Caco-2 (cell line): ENCODE measurements at regions of chr11 and their contacts with region 1.

Region 1: DNA sequence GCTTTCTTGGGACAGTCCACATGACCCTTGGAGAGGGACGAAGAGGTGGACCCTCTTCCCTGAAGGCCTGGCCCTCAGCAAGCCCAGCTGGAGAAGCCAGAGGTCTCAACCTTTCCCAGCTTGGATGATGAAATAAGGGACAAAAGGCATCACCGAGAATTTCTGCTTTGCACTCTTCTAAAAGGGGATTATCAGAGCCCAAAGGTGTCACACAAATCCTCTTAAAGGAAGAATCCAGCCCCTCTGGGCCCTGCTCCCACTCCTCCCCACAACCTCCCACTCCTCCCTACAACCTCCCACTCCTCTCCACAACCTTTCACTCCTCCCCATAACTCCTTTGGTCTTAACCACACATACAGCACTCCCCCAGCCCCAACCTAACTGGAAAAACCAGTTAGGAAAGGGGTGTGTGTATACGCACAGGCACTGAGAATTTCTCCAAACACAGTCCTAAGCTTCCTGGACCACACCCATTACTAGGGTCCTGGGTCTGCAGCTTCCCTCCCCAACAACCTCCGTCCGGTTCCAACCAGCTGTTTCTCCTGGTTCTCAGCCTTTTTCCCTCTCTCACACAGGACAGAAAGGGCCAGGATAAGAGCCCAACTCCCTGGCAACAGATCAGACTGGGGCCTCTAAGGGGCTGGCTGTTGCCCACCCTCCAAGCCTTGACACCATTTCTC is 38.5 kb downstream of the RPL27A start:
- DNase-seq: peak; percentile 88 to 90
- H3K4me3 ChIP-seq: no peak overlapping the region
- H3K4me3 Mint-ChIP-seq: peak overlapping the region; percentile 57
- H3K27ac Mint-ChIP-seq: peak overlapping the region; percentile 90
- H3K4me1 ChIP-seq: peaks cover 82% of the 10 kb centered on the region
- H3K4me1 Mint-ChIP-seq: peaks cover 62% of the 10 kb centered on the region
- H3K27me3 ChIP-seq: no peaks in the 10 kb centered on the region
- H3K27me3 Mint-ChIP-seq: no peaks in the 10 kb centered on the region
- CTCF ChIP-seq: no peak

Region 2: DNA sequence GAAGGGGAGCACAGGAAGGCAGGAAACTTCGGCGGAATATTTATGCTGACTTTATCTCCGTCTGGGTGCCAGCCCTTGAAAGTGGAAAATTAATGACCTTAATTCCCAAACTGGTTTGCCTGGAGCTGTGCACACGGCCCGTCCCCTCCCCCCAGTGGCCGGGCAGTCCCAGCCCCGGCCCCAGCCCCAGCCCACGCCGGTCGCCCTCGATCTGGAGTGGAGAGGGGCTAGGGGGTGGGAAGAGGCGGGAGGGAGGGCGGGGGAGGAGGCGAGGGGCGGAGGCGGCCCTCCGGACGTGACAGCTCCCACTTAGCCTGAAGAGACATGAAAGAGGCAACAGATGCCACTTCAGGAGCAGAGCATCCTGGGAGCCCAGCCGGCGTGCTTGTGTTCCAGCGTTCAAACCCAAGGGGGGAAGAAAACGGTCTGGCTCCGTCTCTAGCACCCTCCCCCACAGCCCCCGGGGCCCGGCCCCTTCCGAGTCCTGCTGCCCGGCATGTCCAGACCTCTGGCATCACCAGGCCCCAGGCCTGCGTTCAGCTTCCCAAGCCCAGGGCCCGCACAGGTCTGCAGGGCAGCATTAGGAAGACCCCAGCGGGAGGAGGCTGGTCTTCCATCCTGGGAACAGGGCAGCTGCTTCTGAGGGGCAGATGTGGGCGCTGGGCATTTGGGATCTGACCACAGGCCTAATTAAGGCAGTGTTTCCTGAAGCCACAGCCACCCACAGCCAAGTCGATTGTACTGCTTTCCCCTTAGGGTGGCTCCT is 437.5 kb before region 1 on chr11:
- CTCF ChIA-PET with region 1: no interaction called
- POLR2A ChIA-PET with region 1: no interaction called
- intact Hi-C with region 1: no loop called
- DNase-seq: no peak
- H3K4me3 ChIP-seq: no peak overlapping the region
- H3K4me3 Mint-ChIP-seq: no peak overlapping the region
- H3K27ac Mint-ChIP-seq: no peak overlapping the region
- H3K4me1 ChIP-seq: no peaks in the 10 kb centered on the region
- H3K4me1 Mint-ChIP-seq: no peaks in the 10 kb centered on the region
- H3K27me3 ChIP-seq: peaks cover 2% of the 10 kb centered on the region; the same call in 1 of the 2 replicates
- H3K27me3 Mint-ChIP-seq: peaks cover 13% of the 10 kb centered on the region
- CTCF ChIP-seq: no peak

Region 3: GRCh38 chr11:8543278-8543677 is 177.9 kb before region 1 on chr11:
- CTCF ChIA-PET with region 1: no interaction called
- POLR2A ChIA-PET with region 1: no interaction called
- intact Hi-C with region 1: no loop called
- DNase-seq: no peak
- H3K4me3 ChIP-seq: no peak overlapping the region
- H3K4me3 Mint-ChIP-seq: no peak overlapping the region
- H3K27ac Mint-ChIP-seq: no peak overlapping the region
- H3K4me1 ChIP-seq: no peaks in the 10 kb centered on the region
- H3K4me1 Mint-ChIP-seq: no peaks in the 10 kb centered on the region
- H3K27me3 ChIP-seq: no peaks in the 10 kb centered on the region
- H3K27me3 Mint-ChIP-seq: peaks cover 10% of the 10 kb centered on the region
- CTCF ChIP-seq: no peak

Region 4: DNA sequence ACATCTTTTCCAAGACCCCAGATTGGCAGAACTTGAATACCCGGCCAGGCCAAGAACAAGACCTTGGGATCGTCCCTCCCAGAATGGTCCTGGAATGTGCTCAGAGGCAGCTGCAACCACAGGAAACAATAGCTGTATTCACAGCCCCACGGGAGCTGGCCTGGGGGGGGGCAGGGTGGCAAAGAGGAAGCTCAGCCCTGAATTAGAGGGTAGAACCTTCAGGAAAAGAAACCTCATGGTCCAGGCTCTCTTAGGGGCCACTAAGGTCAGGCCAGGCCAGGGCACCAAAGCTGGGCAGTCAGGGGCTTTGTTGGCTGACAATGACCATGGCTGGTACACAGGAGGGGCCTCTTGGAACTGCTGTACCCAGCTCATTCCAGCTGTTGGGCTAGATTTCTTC is 21.2 kb before region 1 on chr11:
- CTCF ChIA-PET with region 1: no interaction called
- POLR2A ChIA-PET with region 1: interaction called, 3 read pairs
- intact Hi-C with region 1: loop called (anchors 1 kb)
- DNase-seq: no peak
- H3K4me3 ChIP-seq: no peak overlapping the region
- H3K4me3 Mint-ChIP-seq: no peak overlapping the region
- H3K27ac Mint-ChIP-seq: peak overlapping the region; percentile 69
- H3K4me1 ChIP-seq: peaks cover 21% of the 10 kb centered on the region
- H3K4me1 Mint-ChIP-seq: peaks cover 22% of the 10 kb centered on the region
- H3K27me3 ChIP-seq: no peaks in the 10 kb centered on the region
- H3K27me3 Mint-ChIP-seq: no peaks in the 10 kb centered on the region
- CTCF ChIP-seq: no peak

Region 5: DNA sequence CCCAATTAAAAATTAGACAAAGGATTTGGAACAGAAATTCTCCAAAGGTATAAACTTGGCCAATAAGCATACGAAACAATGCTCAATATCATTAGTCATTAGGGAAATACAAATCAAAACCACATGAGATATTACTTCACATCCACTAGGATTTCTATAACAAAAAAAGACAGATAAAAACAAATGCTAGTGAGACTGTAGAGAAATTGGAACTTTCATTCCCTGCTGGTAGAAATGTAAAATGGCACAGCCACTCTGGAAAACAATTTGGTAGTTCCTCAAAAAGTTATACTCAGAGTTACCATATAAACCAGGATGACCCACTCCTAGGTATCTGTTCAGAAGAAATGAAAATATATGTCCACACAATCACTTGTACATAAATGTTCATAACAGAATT is 33.1 kb after region 1 on chr11:
- CTCF ChIA-PET with region 1: no interaction called
- POLR2A ChIA-PET with region 1: interaction called, 5 read pairs
- intact Hi-C with region 1: loop called (anchors 1 kb)
- DNase-seq: no peak
- H3K4me3 ChIP-seq: no peak overlapping the region
- H3K4me3 Mint-ChIP-seq: no peak overlapping the region
- H3K27ac Mint-ChIP-seq: no peak overlapping the region
- H3K4me1 ChIP-seq: peaks cover 33% of the 10 kb centered on the region
- H3K4me1 Mint-ChIP-seq: peaks cover 17% of the 10 kb centered on the region
- H3K27me3 ChIP-seq: no peaks in the 10 kb centered on the region
- H3K27me3 Mint-ChIP-seq: no peaks in the 10 kb centered on the region
- CTCF ChIP-seq: no peak

Region 6: DNA sequence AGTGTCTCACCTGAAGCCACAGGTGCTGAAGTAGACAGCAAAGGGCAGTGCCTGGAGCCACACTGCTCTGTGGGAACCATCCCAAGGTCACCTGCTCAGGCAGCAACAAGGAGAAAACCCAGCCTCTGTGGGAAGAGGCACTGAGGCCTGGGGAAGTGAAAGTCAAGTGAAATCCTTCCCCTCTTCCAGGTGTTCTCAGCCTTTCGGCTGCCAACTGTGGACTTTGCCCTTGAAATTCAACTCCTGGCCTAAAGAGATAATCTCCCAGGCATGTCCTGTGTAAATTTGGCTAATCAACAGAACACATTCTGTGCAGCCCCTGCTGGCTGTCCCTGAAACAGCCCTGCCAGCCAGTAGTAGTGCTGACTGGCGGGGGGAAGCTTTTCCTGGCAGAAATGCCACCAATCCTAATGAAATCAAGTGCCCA is 73.6 kb after region 1 on chr11:
- CTCF ChIA-PET with region 1: no interaction called
- POLR2A ChIA-PET with region 1: no interaction called
- intact Hi-C with region 1: loop called (anchors 1 kb)
- DNase-seq: peak; percentile 86 to 89
- H3K4me3 ChIP-seq: peak overlapping the region; percentile 33
- H3K4me3 Mint-ChIP-seq: peak overlapping the region; percentile 68
- H3K27ac Mint-ChIP-seq: peak overlapping the region; percentile 83
- H3K4me1 ChIP-seq: peaks cover 31% of the 10 kb centered on the region
- H3K4me1 Mint-ChIP-seq: peaks cover 38% of the 10 kb centered on the region
- H3K27me3 ChIP-seq: no peaks in the 10 kb centered on the region
- H3K27me3 Mint-ChIP-seq: no peaks in the 10 kb centered on the region
- CTCF ChIP-seq: peak; percentile 82 to 94